K562 (cell line): ENCODE measurements at regions of chr12 and their contacts with region 1.

Region 1: DNA sequence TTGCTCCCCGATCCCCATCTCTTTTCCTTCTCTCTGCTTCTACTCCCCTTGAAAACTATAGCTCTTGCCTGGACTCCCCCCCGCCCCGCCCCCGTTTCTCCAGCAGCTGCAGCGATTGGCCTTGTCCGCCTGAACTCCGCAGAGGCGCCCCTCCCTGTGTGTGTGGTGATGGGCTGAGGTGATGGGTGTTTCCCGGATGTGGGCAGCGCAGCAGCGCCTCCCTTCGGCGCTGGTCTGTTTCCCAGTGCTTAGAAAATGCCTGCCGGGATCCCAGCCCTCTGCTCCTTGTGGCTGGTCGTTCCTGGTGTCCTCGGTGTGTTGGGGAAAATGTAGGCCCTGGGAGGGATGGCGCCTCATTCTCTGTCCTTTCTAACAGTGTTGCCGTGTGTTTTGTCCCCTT is 43.3 kb downstream of the GALNT8 start:
- DNase-seq: peak; percentile 51 to 60 (median 54)
- ATAC-seq: peak; percentile 98
- H3K4me3 ChIP-seq: peak overlapping the region; percentile 5; the same call in 1 of the 2 replicates
- H3K27ac ChIP-seq: no peak overlapping the region
- H3K4me1 ChIP-seq: peaks cover 0 to 6% of the 10 kb centered on the region in 2 experiments; a peak in 2 of 5 replicates
- H3K27me3 ChIP-seq: peaks cover 0 to 2% of the 10 kb centered on the region in 2 experiments; a peak in 2 of 5 replicates
- CTCF ChIP-seq: peak; percentile 47 to 54 (median 49); a peak in 5 of 6 replicates
- EP300 ChIP-seq: no peak
- POLR2A ChIP-seq: no peak
- RAD21 ChIP-seq: peak in 1 of 2 experiments; percentile 26; a peak in 2 of 4 replicates

Region 2: GRCh38 chr12:4356041-4356327 is 407.6 kb before region 1 on chr12:
- CTCF ChIA-PET with region 1: no interaction called
- POLR2A ChIA-PET with region 1: no interaction called
- in situ Hi-C with region 1: loop called (anchors 10 kb)
- intact Hi-C with region 1: loop called (anchors 5 kb)
- DNase-seq: peak; percentile 33 to 78 (median 60)
- ATAC-seq: peak; percentile 84
- H3K4me3 ChIP-seq: no peak overlapping the region
- H3K27ac ChIP-seq: no peak overlapping the region
- H3K4me1 ChIP-seq: no peaks in the 10 kb centered on the region
- H3K27me3 ChIP-seq: no peaks in the 10 kb centered on the region
- CTCF ChIP-seq: peak; percentile 78 to 83 (median 80)
- EP300 ChIP-seq: no peak
- POLR2A ChIP-seq: no peak
- RAD21 ChIP-seq: peak; percentile 44 to 80

Region 3: DNA sequence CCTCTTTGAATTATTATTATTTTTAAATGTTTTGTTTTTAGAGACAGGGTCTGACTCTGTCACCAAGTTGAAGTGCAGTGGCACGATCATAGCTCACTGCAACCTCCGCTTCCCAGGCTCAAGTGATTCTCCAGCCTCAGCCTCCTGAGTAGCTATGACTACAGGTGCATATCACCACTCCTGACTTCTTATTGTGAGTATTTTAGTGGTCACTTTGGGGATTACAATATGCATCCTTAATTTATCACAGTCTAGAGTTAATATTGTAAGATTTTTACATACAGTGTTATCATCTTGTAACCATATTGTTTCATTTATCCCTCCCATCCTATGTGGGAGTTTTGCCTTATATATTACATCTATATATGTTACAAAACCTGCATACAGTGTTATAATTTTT is 397.5 kb before region 1 on chr12:
- CTCF ChIA-PET with region 1: no interaction called
- POLR2A ChIA-PET with region 1: no interaction called
- in situ Hi-C with region 1: loop called (anchors 10 kb)
- intact Hi-C with region 1: no loop called
- DNase-seq: no peak
- ATAC-seq: no peak
- H3K4me3 ChIP-seq: no peak overlapping the region
- H3K27ac ChIP-seq: no peak overlapping the region
- H3K4me1 ChIP-seq: peaks cover 0 to 6% of the 10 kb centered on the region in 2 experiments; a peak in 2 of 5 replicates
- H3K27me3 ChIP-seq: peaks cover 0 to 10% of the 10 kb centered on the region in 2 experiments; a peak in 2 of 5 replicates
- CTCF ChIP-seq: no peak
- EP300 ChIP-seq: no peak
- POLR2A ChIP-seq: no peak
- RAD21 ChIP-seq: no peak

Region 4: GRCh38 chr12:4579305-4580102 is 184.0 kb before region 1 on chr12:
- CTCF ChIA-PET with region 1: no interaction called
- POLR2A ChIA-PET with region 1: no interaction called
- in situ Hi-C with region 1: no loop called
- intact Hi-C with region 1: loop called (anchors 10 kb)
- DNase-seq: peak in 3 of 4 experiments; percentile 7 to 44 (median 31)
- ATAC-seq: peak; percentile 69
- H3K4me3 ChIP-seq: no peak overlapping the region
- H3K27ac ChIP-seq: no peak overlapping the region
- H3K4me1 ChIP-seq: no peaks in the 10 kb centered on the region
- H3K27me3 ChIP-seq: peaks cover 2 to 24% of the 10 kb centered on the region in 2 experiments; a peak in 3 of 5 replicates
- CTCF ChIP-seq: peak; percentile 34 to 62 (median 38); a peak in 4 of 6 replicates
- EP300 ChIP-seq: no peak
- POLR2A ChIP-seq: no peak
- RAD21 ChIP-seq: peak; percentile 36 to 68